ENCODE measurements at regions of chr15 and their contacts with region 1.

Region 1: DNA sequence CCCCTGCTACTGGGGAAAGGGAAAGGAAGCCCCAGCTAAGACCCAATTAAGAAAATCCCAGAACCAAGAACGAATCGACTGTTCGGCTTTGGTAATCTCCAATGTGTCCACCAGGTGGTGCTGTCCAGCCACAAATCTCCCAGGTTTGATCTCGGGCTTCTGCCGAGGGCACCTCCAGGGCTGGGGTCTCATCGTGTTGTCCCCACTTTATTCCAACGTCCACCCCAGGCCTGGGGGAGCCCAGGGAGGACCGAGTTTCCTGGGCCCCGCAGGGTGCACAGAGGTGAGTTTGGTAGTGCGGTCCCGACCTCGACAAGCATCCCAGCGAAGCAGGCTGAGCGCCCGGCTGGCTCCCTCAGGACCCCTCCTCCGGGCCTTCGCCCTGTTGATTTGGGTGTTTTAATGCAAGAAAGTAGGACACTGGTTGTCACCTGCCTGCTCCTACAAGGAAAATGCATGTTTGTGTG is 185.1 kb downstream of the GOLGA6L6 start:
- DNase-seq: peak; percentile 83
- ATAC-seq: peak; percentile 66
- H3K4me3 Mint-ChIP-seq: no peak overlapping the region
- H3K27ac Mint-ChIP-seq: no peak overlapping the region
- H3K4me1 Mint-ChIP-seq: peaks cover 5% of the 10 kb centered on the region
- H3K27me3 Mint-ChIP-seq: peaks cover 4% of the 10 kb centered on the region

Region 2: DNA sequence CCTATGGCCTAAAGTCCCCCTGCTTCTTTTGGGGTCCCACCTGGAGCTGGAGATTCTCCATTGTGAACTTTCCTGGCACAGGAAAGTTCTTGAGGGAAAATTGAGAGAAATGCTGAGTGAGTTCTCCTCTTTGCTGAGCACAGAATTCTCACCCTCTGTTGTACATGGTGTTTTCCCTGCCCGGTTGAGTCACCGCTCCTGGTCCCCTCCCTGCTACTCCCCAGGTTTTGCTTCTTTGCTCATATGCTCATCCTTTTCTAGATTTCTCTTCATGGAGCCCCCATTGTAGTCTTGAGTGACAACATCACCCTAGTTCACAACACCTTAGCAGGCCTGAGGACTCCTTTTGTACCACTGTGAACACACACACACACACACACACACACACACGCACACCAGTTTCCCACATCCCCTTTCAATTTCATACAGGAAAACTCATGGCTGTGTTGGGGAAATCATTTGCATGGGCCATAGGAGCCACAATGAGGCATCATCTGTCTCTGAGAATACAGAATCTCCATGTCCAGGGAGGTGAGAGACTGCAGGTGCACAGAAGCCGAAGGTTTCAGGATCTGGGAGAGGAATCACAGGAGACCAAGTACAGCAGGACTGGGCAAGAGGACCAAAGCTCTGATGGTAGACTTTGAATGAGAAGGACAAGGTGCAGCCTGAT is 400.2 kb before region 1 on chr15:
- CTCF ChIA-PET with region 1: no interaction called
- DNase-seq: no peak
- ATAC-seq: no peak
- H3K4me3 Mint-ChIP-seq: no peak overlapping the region
- H3K27ac Mint-ChIP-seq: no peak overlapping the region
- H3K4me1 Mint-ChIP-seq: no peaks in the 10 kb centered on the region
- H3K27me3 Mint-ChIP-seq: no peaks in the 10 kb centered on the region

Region 3: GRCh38 chr15:20272422-20273184 is 83.9 kb before region 1 on chr15:
- CTCF ChIA-PET with region 1: no interaction called
- DNase-seq: no peak
- ATAC-seq: no peak
- H3K4me3 Mint-ChIP-seq: no peak overlapping the region
- H3K27ac Mint-ChIP-seq: no peak overlapping the region
- H3K4me1 Mint-ChIP-seq: no peaks in the 10 kb centered on the region
- H3K27me3 Mint-ChIP-seq: no peaks in the 10 kb centered on the region

Region 4: GRCh38 chr15:20376872-20377271 is 20.4 kb after region 1 on chr15:
- CTCF ChIA-PET with region 1: no interaction called
- DNase-seq: no peak
- ATAC-seq: no peak
- H3K4me3 Mint-ChIP-seq: no peak overlapping the region
- H3K27ac Mint-ChIP-seq: no peak overlapping the region
- H3K4me1 Mint-ChIP-seq: no peaks in the 10 kb centered on the region
- H3K27me3 Mint-ChIP-seq: no peaks in the 10 kb centered on the region

Region 5: GRCh38 chr15:20409247-20409646 is 52.8 kb after region 1 on chr15:
- CTCF ChIA-PET with region 1: no interaction called
- DNase-seq: no peak
- ATAC-seq: no peak
- H3K4me3 Mint-ChIP-seq: no peak overlapping the region
- H3K27ac Mint-ChIP-seq: no peak overlapping the region
- H3K4me1 Mint-ChIP-seq: no peaks in the 10 kb centered on the region
- H3K27me3 Mint-ChIP-seq: no peaks in the 10 kb centered on the region

Region 6: GRCh38 chr15:22224241-22224671 is 1867.8 kb after region 1 on chr15:
- CTCF ChIA-PET with region 1: interaction called, 147 read pairs
- DNase-seq: peak; percentile 37
- ATAC-seq: no peak
- H3K4me3 Mint-ChIP-seq: no peak overlapping the region
- H3K27ac Mint-ChIP-seq: no peak overlapping the region
- H3K4me1 Mint-ChIP-seq: peaks cover 19% of the 10 kb centered on the region
- H3K27me3 Mint-ChIP-seq: peaks cover 5% of the 10 kb centered on the region

Region 7: GRCh38 chr15:22236469-22236868 is 1880.0 kb after region 1 on chr15:
- CTCF ChIA-PET with region 1: interaction called, 11 read pairs
- DNase-seq: no peak
- ATAC-seq: no peak
- H3K4me3 Mint-ChIP-seq: no peak overlapping the region
- H3K27ac Mint-ChIP-seq: no peak overlapping the region
- H3K4me1 Mint-ChIP-seq: no peaks in the 10 kb centered on the region
- H3K27me3 Mint-ChIP-seq: peaks cover 4% of the 10 kb centered on the region